Head of caudate nucleus (tissue), 42 donors: ENCODE measurements at regions of chr1 and their contacts with region 1.

Region 1: GRCh38 chr1:66436378-66437145 is 97.4 kb upstream of the SGIP1 start:
- DNase-seq: no peak

Region 2: DNA sequence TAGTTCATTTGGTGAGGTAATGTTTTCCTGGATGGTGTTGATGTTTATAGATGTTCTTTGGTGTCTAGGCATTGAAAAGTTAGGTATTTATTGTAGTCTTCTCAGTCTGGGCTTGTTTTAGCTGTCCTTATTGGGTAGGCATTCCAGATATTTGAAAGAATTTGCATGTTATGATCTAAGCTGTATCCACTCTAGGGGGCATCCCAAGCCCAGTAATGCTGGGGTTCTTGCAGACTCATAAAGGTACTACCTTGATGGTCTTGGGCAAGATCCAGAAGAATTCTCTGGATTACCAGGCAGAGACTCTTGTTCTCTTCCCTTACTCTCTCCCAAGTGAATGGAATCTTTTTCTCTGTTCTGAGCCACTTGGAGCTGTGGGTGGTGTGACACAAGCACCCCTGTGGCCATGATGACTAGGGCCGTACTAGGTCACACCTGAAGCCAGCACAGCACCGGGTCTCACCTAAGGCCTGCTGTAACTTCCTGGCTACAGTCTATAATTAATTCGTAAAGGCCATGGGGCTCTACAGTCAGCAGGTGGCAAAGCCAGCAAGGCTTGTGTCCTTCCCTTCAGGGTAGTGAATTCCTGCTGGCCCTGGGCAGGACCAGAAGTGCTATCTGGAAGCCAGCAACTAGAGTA is 718.6 kb before region 1 on chr1:
- intact Hi-C with region 1: loop called (anchors 10 kb)
- DNase-seq: peak in 7 of 42 donors; percentile 2 to 21 (median 10)

Region 3: GRCh38 chr1:66132324-66132723 is 304.2 kb before region 1 on chr1:
- intact Hi-C with region 1: no loop called
- DNase-seq: no peak

Region 4: GRCh38 chr1:66265796-66266195 is 170.8 kb before region 1 on chr1:
- intact Hi-C with region 1: loop called (anchors 5 kb)
- DNase-seq: no peak

Region 5: DNA sequence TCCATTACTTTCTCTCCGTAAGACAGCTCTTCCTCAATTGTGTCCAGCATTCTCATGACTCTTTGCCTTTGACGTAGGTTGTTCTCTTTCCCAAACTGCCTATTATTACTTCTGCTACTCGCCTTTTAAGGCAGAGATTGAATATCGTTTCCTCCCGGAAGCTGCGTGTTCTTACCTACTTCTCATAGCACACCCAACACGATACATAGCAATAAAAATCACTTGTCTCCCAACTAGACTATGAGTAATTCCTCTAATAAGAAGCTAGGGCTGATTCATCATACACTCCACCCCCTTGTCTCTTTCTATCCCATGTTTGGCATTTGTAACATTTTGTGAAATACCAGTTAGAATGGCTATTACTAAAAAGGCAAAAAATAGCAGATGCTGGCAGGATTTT is 41.6 kb after region 1 on chr1:
- intact Hi-C with region 1: no loop called
- DNase-seq: peak in 16 of 42 donors; percentile 1 to 49 (median 20)